MCF 10A (cell line): ENCODE measurements at regions of chr5 and their contacts with region 1.

Region 1: DNA sequence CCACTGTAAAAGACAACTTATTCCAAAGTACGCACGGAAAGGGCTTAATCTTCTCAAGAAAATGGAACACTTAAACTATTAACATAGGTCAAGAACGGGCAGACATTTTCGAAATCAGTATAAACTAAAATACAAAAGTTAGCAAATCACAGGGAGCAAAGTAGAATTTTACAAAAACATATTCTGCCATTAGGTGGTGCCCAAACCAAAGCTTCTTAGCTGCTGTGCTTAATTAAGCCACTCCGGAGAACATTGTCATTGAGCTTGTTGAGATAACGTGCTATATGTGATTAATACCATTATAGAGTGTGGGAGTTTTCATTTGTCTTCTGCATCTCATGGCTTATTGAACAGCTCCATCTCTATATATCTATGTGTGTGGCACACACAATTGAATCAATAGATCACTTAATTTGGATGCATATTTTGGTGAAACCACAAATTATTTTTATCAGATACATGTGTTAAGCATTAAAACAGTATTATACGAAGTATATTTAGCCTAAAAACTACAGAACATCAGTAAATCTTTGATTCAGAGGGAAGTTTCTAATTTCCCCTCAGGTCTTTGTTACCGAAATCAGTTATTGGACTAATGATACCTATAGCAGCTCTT is 23.4 kb downstream of the UBLCP1 start:
- DNase-seq: peak; percentile 62
- H3K4me3 Mint-ChIP-seq: no peak overlapping the region
- H3K27ac Mint-ChIP-seq: no peak overlapping the region
- H3K4me1 Mint-ChIP-seq: no peaks in the 10 kb centered on the region
- H3K27me3 Mint-ChIP-seq: no peaks in the 10 kb centered on the region
- CTCF ChIP-seq: peak; percentile 67

Region 2: GRCh38 chr5:158786390-158786789 is 500.1 kb before region 1 on chr5:
- CTCF ChIA-PET with region 1: no interaction called
- POLR2A ChIA-PET with region 1: no interaction called
- intact Hi-C with region 1: no loop called
- DNase-seq: no peak
- H3K4me3 Mint-ChIP-seq: no peak overlapping the region
- H3K27ac Mint-ChIP-seq: no peak overlapping the region
- H3K4me1 Mint-ChIP-seq: no peaks in the 10 kb centered on the region
- H3K27me3 Mint-ChIP-seq: peaks cover 8% of the 10 kb centered on the region
- CTCF ChIP-seq: no peak

Region 3: GRCh38 chr5:159274676-159275075 is 11.9 kb before region 1 on chr5:
- CTCF ChIA-PET with region 1: interaction called, 12 read pairs
- POLR2A ChIA-PET with region 1: interaction called, 9 read pairs
- intact Hi-C with region 1: no loop called
- DNase-seq: no peak
- H3K4me3 Mint-ChIP-seq: peak overlapping the region; percentile 19
- H3K27ac Mint-ChIP-seq: peak overlapping the region; percentile 79
- H3K4me1 Mint-ChIP-seq: peaks cover 8% of the 10 kb centered on the region
- H3K27me3 Mint-ChIP-seq: no peaks in the 10 kb centered on the region
- CTCF ChIP-seq: no peak

Region 4: DNA sequence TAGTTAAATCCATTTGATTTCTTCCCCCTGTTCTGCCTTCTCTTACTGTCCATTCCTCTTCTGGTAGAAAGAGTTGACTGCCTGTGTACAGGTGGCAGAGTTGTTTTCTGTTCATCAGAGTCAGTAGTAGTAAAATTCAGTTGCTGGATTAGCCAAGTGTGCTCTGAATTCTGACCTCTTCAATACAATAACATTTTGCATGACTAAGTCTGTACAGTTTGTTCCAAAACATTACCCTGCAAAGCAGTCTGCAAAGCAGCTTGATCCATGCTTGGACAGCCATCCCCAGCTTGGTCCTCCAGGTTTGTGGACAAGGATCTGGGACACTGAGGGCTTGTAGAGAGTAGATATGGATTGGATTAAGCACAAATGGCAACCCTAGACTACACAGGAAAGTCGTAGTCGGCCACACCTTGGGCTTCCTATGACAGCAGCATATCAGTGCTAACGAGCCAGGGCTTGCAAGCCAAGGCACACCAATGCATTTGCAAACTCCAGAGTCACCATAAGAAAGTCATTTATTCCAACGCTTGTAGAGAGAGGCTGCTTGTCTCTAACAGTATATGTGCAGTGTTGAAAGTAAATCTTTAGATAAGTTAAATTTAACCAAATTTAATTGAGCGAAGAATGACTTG is 18.6 kb after region 1 on chr5:
- CTCF ChIA-PET with region 1: interaction called, 16 read pairs
- POLR2A ChIA-PET with region 1: interaction called, 11 read pairs
- intact Hi-C with region 1: no loop called
- DNase-seq: peak; percentile 28
- H3K4me3 Mint-ChIP-seq: no peak overlapping the region
- H3K27ac Mint-ChIP-seq: peak overlapping the region; percentile 74
- H3K4me1 Mint-ChIP-seq: peaks cover 20% of the 10 kb centered on the region
- H3K27me3 Mint-ChIP-seq: no peaks in the 10 kb centered on the region
- CTCF ChIP-seq: no peak

Region 5: GRCh38 chr5:159324102-159324760 is 37.7 kb after region 1 on chr5:
- CTCF ChIA-PET with region 1: interaction called, 23 read pairs
- POLR2A ChIA-PET with region 1: interaction called, 5 read pairs
- intact Hi-C with region 1: no loop called
- DNase-seq: peak; percentile 35
- H3K4me3 Mint-ChIP-seq: no peak overlapping the region
- H3K27ac Mint-ChIP-seq: no peak overlapping the region
- H3K4me1 Mint-ChIP-seq: no peaks in the 10 kb centered on the region
- H3K27me3 Mint-ChIP-seq: no peaks in the 10 kb centered on the region
- CTCF ChIP-seq: no peak

Region 6: DNA sequence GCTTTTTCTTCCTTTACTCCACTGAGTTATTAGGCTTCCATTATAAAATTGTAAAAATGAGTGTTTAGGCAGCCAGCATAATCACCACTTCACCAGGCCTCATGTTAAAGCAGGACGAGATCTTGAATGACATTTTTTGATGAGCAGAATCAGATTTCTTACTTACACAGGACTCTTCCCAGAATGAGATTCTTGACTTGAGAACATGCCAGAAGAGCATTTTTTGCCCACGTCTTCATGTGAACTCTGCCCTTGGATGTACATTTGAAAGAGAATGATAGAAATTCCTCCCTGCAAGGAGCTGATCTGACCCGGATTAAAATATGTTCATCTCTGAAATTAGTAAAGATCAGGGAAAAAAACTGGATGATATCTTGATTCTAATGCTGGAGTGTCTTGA is 417.6 kb after region 1 on chr5:
- CTCF ChIA-PET with region 1: no interaction called
- POLR2A ChIA-PET with region 1: no interaction called
- intact Hi-C with region 1: no loop called
- DNase-seq: no peak
- H3K4me3 Mint-ChIP-seq: no peak overlapping the region
- H3K27ac Mint-ChIP-seq: no peak overlapping the region
- H3K4me1 Mint-ChIP-seq: no peaks in the 10 kb centered on the region
- H3K27me3 Mint-ChIP-seq: peaks cover 10% of the 10 kb centered on the region
- CTCF ChIP-seq: no peak